Mammary epithelial cell (primary cell): ENCODE measurements at regions of chr3 and their contacts with region 1.

Region 1: DNA sequence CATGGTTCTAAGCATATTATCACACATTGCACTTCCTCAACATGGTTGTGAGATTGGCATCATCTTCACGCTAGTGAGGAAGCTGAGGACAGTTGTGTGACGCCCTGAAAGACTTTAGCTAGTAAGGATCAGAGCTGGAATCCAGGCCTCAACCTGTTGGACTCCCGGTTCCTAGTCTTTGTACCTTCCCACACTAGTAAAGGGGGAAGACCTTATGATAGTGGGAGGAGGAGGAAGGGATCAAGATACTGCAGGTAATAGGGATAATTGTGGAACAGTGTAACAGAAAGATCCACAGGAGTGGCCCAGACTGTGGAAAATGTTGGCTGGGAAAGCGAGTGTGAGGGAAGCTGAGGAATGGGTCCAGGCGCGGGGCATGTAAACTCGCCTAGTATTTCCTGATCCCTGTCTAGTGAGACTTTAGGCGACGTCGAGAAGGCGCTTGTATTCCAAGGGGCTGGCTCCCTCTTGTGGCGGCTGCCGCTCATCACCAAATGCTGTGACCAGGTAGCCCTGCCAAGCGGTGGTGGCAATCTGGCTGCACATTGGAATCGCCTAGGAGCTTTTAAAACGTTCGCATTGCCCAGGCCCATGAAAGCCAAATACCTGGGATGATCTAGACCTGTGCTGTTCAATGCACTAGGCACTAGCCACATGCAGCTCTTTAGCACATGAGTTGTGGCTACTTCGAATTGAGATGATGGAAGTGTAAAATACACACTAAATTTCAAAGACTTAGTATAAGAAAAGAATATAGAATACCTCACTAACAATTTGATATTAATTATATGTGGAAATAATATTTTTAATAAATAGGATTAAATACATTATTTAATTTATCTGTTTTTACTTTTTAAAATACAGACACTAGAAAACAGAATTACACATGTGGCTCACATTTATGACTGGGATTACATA is 38.8 kb upstream of the CLDN18 start:
- DNase-seq: peak; percentile 50
- H3K4me3 ChIP-seq: peak overlapping the region in 1 of 3 experiments; percentile 14
- H3K27ac ChIP-seq: no peak overlapping the region
- H3K4me1 ChIP-seq: peaks cover 5% of the 10 kb centered on the region
- H3K27me3 ChIP-seq: no peaks in the 10 kb centered on the region
- CTCF ChIP-seq: peak; percentile 86 to 96

Region 2: DNA sequence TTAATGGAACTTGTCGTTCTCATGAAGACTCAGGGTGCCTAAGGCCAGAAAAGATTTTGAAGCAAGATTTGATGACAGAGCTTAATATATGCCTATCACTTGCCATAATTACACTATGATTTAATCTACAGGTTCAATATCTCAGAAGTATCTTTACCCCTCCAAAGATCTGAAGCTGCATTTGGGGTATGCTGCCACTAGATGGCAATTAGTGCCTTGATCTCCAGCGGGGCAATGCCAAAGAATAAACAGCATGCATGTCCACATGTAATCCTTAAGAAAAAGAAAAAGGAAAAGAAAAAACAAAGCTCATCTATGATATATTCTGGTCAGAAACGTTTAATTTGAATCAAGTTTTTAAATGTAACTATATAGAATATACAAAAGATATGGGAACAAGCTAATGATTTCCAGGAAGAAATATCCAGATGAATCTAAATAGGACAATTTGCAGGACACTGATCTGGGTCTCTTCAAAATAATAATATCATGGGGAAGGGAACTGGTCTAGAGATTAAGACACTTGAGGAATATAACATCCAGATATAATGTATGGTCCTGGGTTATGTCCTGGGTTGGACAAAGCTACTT is 262.1 kb before region 1 on chr3:
- CTCF ChIA-PET with region 1: no interaction called
- dilution Hi-C with region 1: no loop called
- in situ Hi-C with region 1: no loop called
- intact Hi-C with region 1: loop called (anchors 1 kb)
- DNase-seq: peak; percentile 6
- H3K4me3 ChIP-seq: no peak overlapping the region
- H3K27ac ChIP-seq: no peak overlapping the region
- H3K4me1 ChIP-seq: no peaks in the 10 kb centered on the region
- H3K27me3 ChIP-seq: no peaks in the 10 kb centered on the region
- CTCF ChIP-seq: peak; percentile 60 to 73

Region 3: DNA sequence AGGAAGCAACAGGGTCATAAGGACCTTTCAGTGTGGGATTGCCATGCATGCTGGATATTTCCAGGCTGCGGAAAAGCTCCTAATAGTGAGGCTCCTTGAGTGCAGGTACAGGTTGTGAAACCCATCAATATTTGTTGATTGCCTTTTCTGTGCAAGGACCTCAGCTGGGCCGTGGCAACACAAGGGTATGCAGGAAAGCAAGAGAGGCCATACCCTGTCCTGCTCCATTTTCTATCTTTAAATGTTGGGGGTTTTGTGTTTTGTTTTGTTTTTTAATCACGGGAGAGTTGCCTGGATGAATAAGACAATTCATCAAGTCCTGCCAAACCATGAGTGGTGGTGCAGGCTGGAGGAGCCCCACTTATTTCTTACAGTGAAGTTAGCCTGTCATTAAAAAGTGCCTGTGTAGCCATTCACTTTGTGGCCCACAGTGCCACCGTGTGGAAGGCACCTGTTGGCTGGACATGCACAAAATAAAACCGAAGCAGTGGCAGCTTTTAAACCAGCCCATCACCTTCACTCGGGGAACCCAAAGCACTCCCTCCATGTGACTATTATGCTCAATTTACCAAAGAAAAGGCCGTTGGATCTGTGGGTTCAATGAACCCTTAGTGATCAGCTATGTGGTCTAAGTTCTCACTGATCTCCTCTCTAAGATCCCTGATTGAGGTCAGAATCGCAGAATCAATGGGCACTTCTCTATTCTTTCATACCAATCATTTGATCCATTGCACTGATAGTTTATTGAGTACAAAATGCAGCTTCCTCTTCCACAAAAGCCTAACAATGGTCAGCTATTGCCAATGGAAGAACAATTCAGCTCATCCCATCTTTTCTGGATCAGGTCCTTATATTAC is 81.0 kb after region 1 on chr3:
- CTCF ChIA-PET with region 1: no interaction called
- dilution Hi-C with region 1: no loop called
- in situ Hi-C with region 1: no loop called
- intact Hi-C with region 1: loop called (anchors 1 kb)
- DNase-seq: peak; percentile 32
- H3K4me3 ChIP-seq: no peak overlapping the region
- H3K27ac ChIP-seq: no peak overlapping the region
- H3K4me1 ChIP-seq: no peaks in the 10 kb centered on the region
- H3K27me3 ChIP-seq: no peaks in the 10 kb centered on the region
- CTCF ChIP-seq: peak; percentile 80 to 83

Region 4: DNA sequence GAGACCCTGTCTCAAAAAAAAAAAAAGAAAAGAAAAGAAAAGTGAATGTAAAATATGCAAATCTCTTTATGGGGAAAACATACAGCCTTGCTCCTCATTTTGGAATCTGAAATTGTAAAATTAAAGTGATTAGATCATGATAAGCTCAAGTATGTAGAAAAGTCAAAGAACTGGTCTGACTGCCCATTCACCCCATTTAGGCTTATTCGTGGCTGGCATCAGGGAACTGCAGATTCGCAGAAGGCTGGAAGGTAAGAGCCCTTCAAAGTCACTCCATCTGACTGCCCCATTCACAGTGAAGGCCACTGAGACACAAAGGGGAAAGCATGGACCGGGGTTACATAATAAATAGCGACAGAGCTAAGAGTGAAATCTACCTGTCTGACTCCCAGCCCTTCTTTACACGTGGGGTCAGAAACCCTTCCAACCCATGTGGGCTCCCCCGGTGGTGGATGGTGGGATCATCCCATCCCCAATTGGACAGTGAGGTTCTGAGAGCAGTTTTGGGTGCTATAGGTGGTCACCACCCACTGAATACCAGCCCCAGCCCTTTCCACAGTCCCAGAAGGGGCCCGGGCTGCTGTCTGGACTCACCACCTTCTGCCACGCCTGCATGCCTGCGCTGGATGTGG is 126.1 kb after region 1 on chr3:
- CTCF ChIA-PET with region 1: no interaction called
- dilution Hi-C with region 1: no loop called
- in situ Hi-C with region 1: no loop called
- intact Hi-C with region 1: no loop called
- DNase-seq: no peak
- H3K4me3 ChIP-seq: no peak overlapping the region
- H3K27ac ChIP-seq: no peak overlapping the region
- H3K4me1 ChIP-seq: no peaks in the 10 kb centered on the region
- H3K27me3 ChIP-seq: no peaks in the 10 kb centered on the region
- CTCF ChIP-seq: peak in 1 of 2 donors; percentile 17

Region 5: GRCh38 chr3:138118612-138119422 is 147.6 kb after region 1 on chr3:
- CTCF ChIA-PET with region 1: no interaction called
- dilution Hi-C with region 1: no loop called
- in situ Hi-C with region 1: no loop called
- intact Hi-C with region 1: loop called (anchors 1 kb)
- DNase-seq: peak; percentile 67
- H3K4me3 ChIP-seq: no peak overlapping the region
- H3K27ac ChIP-seq: no peak overlapping the region
- H3K4me1 ChIP-seq: peaks cover 8% of the 10 kb centered on the region
- H3K27me3 ChIP-seq: no peaks in the 10 kb centered on the region
- CTCF ChIP-seq: peak; percentile 89 to 95